ENCODE measurements at regions of chr9 and their contacts with region 1.

Region 1: GRCh38 chr9:130701056-130702022 is 7.8 kb downstream of the EXOSC2 start:
- DNase-seq: peak; percentile 85
- H3K4me3 ChIP-seq: no peak overlapping the region
- H3K27ac ChIP-seq: peak overlapping the region in 3 of 4 donors; percentile 6 to 50 (median 23)
- H3K4me1 ChIP-seq: peaks cover 0 to 10% (median 3%) of the 10 kb centered on the region in 4 donors
- H3K27me3 ChIP-seq: no peaks in the 10 kb centered on the region
- CTCF ChIP-seq: peak; percentile 90 to 96 (median 94)
- EP300 ChIP-seq: no peak
- POLR2A ChIP-seq: no peak

Region 2: DNA sequence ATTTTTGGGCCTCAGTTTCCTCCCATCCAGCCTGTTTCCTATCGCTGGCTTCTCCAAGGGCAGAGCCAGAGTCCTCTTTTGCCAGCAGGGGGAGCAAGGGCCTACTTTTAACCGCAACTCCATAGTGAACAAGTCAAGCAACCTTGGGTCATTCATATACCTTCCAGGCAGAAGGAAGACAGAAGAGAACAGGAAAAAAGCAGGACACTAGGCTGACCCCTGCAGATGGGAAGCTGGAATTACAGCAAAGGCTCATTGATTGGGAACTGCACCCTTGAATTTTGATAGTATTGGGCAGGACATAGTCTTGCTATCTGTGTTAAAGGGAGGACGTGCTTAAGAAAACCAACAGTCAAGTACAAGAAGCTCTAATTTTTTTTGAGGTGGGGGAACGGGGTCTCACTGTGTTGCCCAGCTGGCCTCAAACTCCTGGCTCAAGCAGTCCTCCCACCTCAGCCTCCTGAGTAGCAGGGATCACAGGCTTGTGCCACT is 165.2 kb after region 1 on chr9:
- in situ Hi-C with region 1: loop called (anchors 5 to 10 kb)
- intact Hi-C with region 1: loop called (anchors 2 kb)
- DNase-seq: peak; percentile 86
- H3K4me3 ChIP-seq: no peak overlapping the region
- H3K27ac ChIP-seq: peak overlapping the region in 1 of 4 donors; percentile 46
- H3K4me1 ChIP-seq: peaks cover 4 to 68% (median 29%) of the 10 kb centered on the region in 4 donors
- H3K27me3 ChIP-seq: no peaks in the 10 kb centered on the region
- CTCF ChIP-seq: peak; percentile 77 to 98 (median 90)
- EP300 ChIP-seq: no peak
- POLR2A ChIP-seq: no peak